ENCODE measurements at regions of chr1 and their contacts with region 1.

Region 1: GRCh38 chr1:45303582-45304310 is 22.9 kb upstream of the HPDL start:
- DNase-seq: peak; percentile 99 to 100
- ATAC-seq: peak; percentile 97
- H3K4me3 ChIP-seq: peak overlapping the region; percentile 33 to 62
- H3K27ac ChIP-seq: peak overlapping the region in 1 of 2 donors; percentile 69
- H3K4me1 ChIP-seq: no peaks in the 10 kb centered on the region
- H3K27me3 ChIP-seq: no peaks in the 10 kb centered on the region

Region 2: GRCh38 chr1:44799770-44800584 is 503.8 kb before region 1 on chr1 and contains the start of gene PLK3:
- intact Hi-C with region 1: loop called in 1 of 2 experiments (anchors 5 kb)
- DNase-seq: peak; percentile 98 to 99
- ATAC-seq: peak; percentile 96
- H3K4me3 ChIP-seq: peak within 1 kb of the TSS; percentile 73 to 97
- H3K27ac ChIP-seq: peak within 1 kb of the TSS; percentile 92 to 95
- H3K4me1 ChIP-seq: no peaks in the 10 kb centered on the region
- H3K27me3 ChIP-seq: no peaks in the 10 kb centered on the region
- total RNA-seq, gene PLK3: 28.8 to 84.3 TPM

Region 3: DNA sequence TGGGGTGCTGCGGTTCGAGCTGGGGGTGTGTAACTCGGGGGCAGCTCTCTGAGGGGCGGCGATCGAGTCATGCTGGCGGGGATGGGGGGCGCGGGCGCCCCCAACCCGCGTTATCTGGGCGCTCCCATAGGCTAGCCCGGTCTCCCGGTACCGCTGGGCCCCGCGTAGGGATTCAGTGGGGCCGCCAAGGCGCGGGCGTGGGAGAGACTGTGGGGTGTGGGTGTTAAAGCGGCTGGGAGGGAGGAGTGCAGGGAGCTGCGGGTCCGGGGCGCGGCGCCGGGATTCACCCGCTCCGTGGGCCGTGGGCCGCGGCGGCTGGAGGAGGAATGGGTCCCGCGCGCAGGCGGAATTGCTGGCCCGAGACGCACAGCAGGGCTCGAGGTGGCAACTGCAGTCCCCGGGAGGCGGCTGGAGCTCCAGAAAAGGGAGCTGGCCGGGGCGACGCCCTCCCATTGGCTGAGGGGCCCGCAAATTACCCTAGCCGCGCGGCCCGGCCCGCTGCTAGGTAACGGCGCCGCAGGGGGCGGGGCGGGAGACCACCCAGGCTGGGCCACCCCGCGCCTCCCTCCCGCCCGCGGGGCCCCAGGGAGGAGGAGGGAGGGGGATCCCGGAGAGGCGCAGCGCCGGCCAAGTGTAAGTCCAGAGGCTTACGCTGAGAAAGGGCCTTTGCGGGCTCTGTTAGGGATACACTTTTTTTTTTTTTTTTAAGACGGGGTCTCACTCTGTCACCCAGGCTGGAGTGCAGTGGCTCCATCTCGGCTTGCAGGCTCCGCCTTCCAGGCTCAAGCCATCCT is 460.7 kb before region 1 on chr1 and contains the start of gene PTCH2:
- intact Hi-C with region 1: loop called (anchors 5 to 10 kb)
- DNase-seq: peak; percentile 82 to 93
- ATAC-seq: peak; percentile 87
- H3K4me3 ChIP-seq: peak within 1 kb of the TSS; percentile 27 to 76
- H3K27ac ChIP-seq: no peak within 1 kb of the TSS
- H3K4me1 ChIP-seq: no peaks in the 10 kb centered on the region
- H3K27me3 ChIP-seq: no peaks in the 10 kb centered on the region
- total RNA-seq, gene PTCH2: 1.7 to 6.3 TPM

Region 4: GRCh38 chr1:45205910-45206721 is 97.6 kb before region 1 on chr1 and contains the start of gene ZSWIM5:
- intact Hi-C with region 1: loop called in 1 of 2 experiments (anchors 10 kb)
- DNase-seq: peak; percentile 71 to 90
- ATAC-seq: peak; percentile 93
- H3K4me3 ChIP-seq: peak within 1 kb of the TSS; percentile 58 to 75
- H3K27ac ChIP-seq: peak within 1 kb of the TSS; percentile 51 to 70
- H3K4me1 ChIP-seq: no peaks in the 10 kb centered on the region
- H3K27me3 ChIP-seq: no peaks in the 10 kb centered on the region
- total RNA-seq, gene ZSWIM5: 2.1 to 2.8 TPM

Region 5: GRCh38 chr1:45490626-45491486 is 187.1 kb after region 1 on chr1 and contains the start of gene TESK2:
- intact Hi-C with region 1: loop called in 1 of 2 experiments (anchors 1 kb)
- DNase-seq: peak; percentile 97
- ATAC-seq: peak; percentile 99
- H3K4me3 ChIP-seq: peak within 1 kb of the TSS; percentile 37 to 70
- H3K27ac ChIP-seq: no peak within 1 kb of the TSS
- H3K4me1 ChIP-seq: no peaks in the 10 kb centered on the region
- H3K27me3 ChIP-seq: no peaks in the 10 kb centered on the region
- total RNA-seq, gene TESK2: 5.2 to 8.1 TPM

Measured in aorta (tissue), 5 donors.